A673 (cell line): ENCODE measurements at regions of chr12 and their contacts with region 1.

Region 1: DNA sequence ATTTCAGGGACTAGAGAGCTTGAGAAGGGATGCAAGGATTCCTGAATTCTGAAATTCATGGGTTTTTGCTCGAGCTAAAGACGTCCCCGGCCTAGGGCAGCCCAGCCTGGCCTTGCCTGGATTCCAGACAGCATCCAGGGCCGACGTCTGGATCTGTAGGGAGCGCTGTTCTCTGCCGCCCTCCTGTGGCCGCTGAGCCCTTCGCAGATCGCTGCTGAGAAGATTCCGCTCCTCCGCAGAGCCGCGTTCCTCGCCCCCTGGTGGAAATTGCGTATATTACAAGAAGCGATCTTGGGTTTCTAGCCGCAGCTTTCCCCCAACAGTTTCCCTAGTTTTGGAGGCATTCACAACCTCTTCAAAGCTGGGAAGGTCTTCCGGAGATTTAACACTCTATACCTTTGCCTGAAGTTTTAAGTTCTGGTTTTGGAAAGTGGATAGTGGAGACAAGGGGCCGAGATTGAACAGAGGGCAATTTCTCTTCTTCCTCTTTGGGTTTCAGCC is 5.1 kb downstream of the CISTR start:
- DNase-seq: peak; percentile 94
- H3K4me3 ChIP-seq: no peak overlapping the region
- H3K27ac ChIP-seq: no peak overlapping the region
- H3K4me1 ChIP-seq: peaks cover 11% of the 10 kb centered on the region
- H3K27me3 ChIP-seq: no peaks in the 10 kb centered on the region
- CTCF ChIP-seq: peak; percentile 100

Region 2: DNA sequence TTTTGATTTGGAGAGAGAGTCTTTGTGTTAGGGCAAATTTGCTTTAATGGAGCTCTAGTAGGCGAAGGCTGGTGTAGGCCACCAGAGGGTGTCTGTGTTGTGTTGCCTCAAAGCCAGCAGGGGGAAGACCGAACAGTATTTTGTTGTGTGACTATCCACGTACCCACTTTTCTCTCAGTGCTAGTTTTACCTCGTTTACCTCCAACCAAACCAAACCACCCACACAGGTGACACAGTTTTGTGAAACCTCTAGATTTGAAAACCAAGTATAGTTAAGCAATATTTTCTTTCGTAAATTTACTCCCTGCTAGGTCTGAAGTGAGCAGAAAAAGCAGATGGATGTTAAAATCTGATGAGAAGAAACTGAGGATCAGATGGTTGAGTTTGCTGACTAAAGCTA is 203.1 kb before region 1 on chr12:
- CTCF ChIA-PET with region 1: interaction called, 7 read pairs
- POLR2A ChIA-PET with region 1: no interaction called
- intact Hi-C with region 1: loop called (anchors 2 kb)
- DNase-seq: peak; percentile 83
- H3K4me3 ChIP-seq: no peak overlapping the region
- H3K27ac ChIP-seq: peak overlapping the region; percentile 62
- H3K4me1 ChIP-seq: peaks cover 14% of the 10 kb centered on the region
- H3K27me3 ChIP-seq: no peaks in the 10 kb centered on the region
- CTCF ChIP-seq: peak; percentile 93

Region 3: DNA sequence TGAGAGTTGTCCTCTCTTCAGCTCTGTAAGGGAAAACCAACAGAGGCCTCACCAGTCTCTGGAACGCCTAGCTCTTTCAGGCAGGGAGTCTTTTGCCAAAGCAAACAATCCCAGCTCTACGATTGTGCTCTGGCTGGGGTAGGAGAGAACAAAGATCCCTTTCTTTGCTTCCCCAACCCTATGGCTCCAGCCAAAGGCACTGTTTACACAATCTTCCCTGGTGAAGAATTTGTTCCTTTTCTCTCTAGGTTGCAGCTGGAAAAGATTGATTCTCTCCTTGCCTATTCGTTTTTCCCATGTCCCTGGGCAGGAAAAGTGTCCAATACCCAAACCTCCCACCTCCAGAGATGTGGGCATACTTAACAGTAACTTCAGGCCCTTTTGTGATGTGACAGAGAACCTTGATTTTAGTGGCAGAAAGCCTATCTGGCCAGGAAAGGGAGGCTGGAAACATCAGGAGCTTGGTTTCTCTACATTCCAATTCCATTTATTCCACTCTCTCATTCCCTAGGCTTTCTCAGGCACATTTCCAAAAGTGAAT is 87.6 kb before region 1 on chr12:
- CTCF ChIA-PET with region 1: interaction called, 10 read pairs
- POLR2A ChIA-PET with region 1: no interaction called
- intact Hi-C with region 1: no loop called
- DNase-seq: no peak
- H3K4me3 ChIP-seq: no peak overlapping the region
- H3K27ac ChIP-seq: peak overlapping the region; percentile 46
- H3K4me1 ChIP-seq: no peaks in the 10 kb centered on the region
- H3K27me3 ChIP-seq: no peaks in the 10 kb centered on the region
- CTCF ChIP-seq: no peak

Region 4: DNA sequence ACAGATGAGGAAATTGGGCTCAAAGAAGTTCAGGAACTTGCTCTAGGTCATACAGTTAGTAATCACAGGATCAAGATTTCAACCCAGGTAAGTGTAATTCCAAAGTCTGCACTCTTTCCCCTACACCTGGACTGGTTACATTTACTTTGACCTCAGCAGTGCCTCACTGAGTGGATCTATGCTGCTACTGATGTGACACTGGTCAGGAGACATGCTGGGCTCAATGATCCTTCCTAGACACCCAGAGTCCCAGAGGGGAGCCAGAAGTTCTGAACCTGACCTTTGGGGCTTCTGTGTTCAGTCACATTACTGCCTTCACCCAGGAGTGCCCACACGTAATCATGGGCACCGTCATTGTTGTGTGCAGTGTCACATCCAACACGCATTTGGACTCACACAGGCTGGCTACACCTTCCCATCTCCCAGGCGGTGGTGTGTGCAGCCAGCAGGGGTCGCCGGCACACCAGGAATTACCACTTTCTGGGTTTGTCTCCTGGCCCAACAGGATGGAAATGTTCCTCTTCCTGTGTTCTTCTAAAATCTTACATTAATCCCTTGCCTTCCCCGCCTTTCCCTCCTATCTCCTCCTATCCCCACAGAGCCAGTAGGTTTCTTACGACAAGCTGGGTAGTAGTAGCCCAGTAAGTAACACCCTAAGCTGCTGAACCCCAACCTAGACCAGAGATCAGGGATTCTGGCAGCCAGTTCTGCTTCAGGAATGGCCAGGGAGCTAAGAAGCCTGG is 45.0 kb before region 1 on chr12:
- CTCF ChIA-PET with region 1: interaction called, 32 read pairs
- POLR2A ChIA-PET with region 1: no interaction called
- intact Hi-C with region 1: loop called (anchors 1 kb)
- DNase-seq: peak; percentile 85
- H3K4me3 ChIP-seq: no peak overlapping the region
- H3K27ac ChIP-seq: no peak overlapping the region
- H3K4me1 ChIP-seq: peaks cover 15% of the 10 kb centered on the region
- H3K27me3 ChIP-seq: no peaks in the 10 kb centered on the region
- CTCF ChIP-seq: peak; percentile 98

Region 5: DNA sequence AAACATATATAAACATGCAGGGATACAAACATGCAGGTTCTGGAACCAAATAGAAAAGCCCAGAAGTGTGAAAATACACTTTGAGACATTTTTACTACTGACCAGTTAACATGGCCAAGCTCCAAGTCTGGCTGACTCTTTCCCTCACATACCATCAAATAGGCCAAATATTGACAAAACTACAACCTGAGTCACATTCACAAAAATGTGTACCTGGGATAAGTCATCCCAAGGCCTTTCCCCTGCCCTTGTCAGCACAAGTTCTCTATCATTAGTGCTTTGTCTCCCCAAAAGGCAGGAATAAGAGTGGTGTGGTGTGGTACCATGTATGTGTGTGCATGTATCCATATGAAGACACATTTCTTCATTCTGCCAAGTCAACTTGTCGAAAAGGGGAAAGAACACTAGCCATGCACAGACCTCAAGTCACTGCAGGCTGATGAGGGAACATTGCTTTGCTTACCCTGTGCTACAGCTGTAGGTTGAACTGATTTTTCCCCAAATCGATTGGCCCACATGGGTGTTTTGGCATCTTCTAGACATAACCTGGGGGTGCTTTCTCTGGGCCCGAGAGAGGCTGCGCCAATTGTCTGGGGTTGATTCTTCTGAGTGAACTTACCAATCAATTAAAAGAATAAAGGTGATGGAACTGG is 321.9 kb after region 1 on chr12:
- CTCF ChIA-PET with region 1: no interaction called
- POLR2A ChIA-PET with region 1: no interaction called
- intact Hi-C with region 1: no loop called
- DNase-seq: no peak
- H3K4me3 ChIP-seq: no peak overlapping the region
- H3K27ac ChIP-seq: no peak overlapping the region
- H3K4me1 ChIP-seq: no peaks in the 10 kb centered on the region
- H3K27me3 ChIP-seq: no peaks in the 10 kb centered on the region
- CTCF ChIP-seq: no peak

Region 6: GRCh38 chr12:54207484-54208294 is 461.0 kb after region 1 on chr12:
- CTCF ChIA-PET with region 1: no interaction called
- POLR2A ChIA-PET with region 1: no interaction called
- intact Hi-C with region 1: no loop called
- DNase-seq: peak; percentile 73
- H3K4me3 ChIP-seq: no peak overlapping the region
- H3K27ac ChIP-seq: no peak overlapping the region
- H3K4me1 ChIP-seq: no peaks in the 10 kb centered on the region
- H3K27me3 ChIP-seq: no peaks in the 10 kb centered on the region
- CTCF ChIP-seq: peak; percentile 97

Region 7: DNA sequence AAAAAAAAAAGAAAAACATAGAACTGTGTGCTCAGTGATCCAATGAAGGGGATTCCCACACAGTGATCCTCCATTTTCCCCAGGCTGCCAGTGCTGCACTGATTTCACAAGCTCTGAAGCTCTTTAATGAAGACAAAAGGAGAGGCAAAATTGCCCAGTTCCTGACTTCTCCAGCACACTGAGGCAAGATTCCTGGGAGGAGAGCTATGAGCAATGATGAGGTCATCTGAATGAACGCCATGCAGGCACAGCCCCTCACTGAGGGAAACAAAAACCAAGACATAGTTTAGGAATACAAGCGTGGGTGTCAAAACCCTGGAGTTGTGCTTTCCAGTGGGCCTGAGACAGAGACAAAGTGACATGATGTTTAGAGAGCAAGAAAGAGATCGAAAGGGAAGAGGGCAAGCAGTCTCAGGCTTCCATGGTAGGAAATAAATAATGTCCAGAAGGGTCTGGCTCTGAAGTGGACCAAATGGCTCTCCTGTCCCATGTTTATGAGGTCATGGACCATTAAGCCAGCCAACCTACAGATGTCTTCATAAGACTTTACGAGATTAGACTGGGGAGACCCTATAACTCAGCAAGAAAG is 483.1 kb after region 1 on chr12:
- CTCF ChIA-PET with region 1: no interaction called
- POLR2A ChIA-PET with region 1: interaction called, 10 read pairs
- intact Hi-C with region 1: no loop called
- DNase-seq: peak; percentile 80
- H3K4me3 ChIP-seq: no peak overlapping the region
- H3K27ac ChIP-seq: peak overlapping the region; percentile 15
- H3K4me1 ChIP-seq: peaks cover 4% of the 10 kb centered on the region
- H3K27me3 ChIP-seq: no peaks in the 10 kb centered on the region
- CTCF ChIP-seq: no peak